ENCODE measurements at regions of chr15 and their contacts with region 1.

Region 1: GRCh38 chr15:101088788-101089583 is 162.9 kb downstream of the CHSY1 start:
- DNase-seq: peak; percentile 89
- CTCF ChIP-seq: peak; percentile 98

Region 2: GRCh38 chr15:101057841-101058407 is 31.1 kb before region 1 on chr15:
- CTCF ChIA-PET with region 1: no interaction called
- POLR2A ChIA-PET with region 1: no interaction called
- DNase-seq: no peak
- CTCF ChIP-seq: no peak

Region 3: GRCh38 chr15:101251830-101252820 is 163.1 kb after region 1 on chr15 and contains the start of gene CHSY1:
- CTCF ChIA-PET with region 1: interaction called, 70 read pairs
- POLR2A ChIA-PET with region 1: no interaction called
- DNase-seq: peak; percentile 88
- CTCF ChIP-seq: peak; percentile 51

Region 4: GRCh38 chr15:101264011-101264410 is 175.0 kb after region 1 on chr15:
- CTCF ChIA-PET with region 1: interaction called, 70 read pairs
- POLR2A ChIA-PET with region 1: no interaction called
- DNase-seq: peak; percentile 53
- CTCF ChIP-seq: no peak

Measured in GM10248 (cell line).